H1 (cell line): ENCODE measurements at regions of chr2 and their contacts with region 1.

Region 1: DNA sequence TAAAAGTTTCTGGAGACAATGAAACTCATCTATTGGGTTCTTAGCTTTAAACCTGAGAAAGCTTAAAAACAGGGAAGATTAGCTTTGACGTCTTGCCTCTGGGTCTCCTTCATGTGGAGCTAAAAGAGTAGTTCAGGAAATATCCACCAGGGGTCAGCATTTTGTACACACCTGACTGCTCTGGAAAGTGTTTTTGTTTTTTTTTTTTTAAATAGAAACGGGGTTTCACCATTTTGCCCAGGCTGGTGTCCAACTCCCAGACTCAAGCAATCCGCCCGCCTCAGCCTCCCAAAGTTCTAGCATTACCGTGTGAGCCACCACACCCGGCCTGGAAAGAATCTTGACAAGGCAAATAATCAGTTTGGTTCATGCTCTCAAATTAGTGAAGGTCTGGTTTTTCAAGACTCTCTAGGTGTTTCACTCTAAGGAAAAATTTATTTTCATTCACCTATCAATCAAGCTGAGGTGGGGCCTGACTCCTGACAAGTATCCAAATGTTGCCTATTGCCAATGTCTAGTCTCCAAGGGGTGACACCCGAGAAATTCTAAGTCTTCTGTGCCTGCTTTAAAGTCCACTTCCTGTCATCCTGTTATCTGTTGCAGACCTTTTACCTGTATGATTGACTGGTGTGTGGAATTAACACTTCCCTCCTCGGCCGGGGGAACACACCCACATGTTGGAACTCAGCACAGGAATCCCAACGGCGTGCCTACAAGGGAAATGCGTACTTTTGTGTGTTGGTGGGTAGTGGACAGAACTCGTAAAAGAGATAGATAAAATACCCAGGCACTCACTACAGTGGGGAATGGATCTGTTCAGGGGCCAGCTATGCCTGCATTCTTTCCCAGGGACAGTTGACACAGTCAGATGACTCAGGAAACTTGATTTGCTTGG is 11.3 kb downstream of the IL1RN start:
- DNase-seq: peak in 1 of 2 experiments; percentile 48
- H3K4me3 ChIP-seq: no peak overlapping the region
- H3K27ac ChIP-seq: no peak overlapping the region
- H3K4me1 ChIP-seq: no peaks in the 10 kb centered on the region
- H3K27me3 ChIP-seq: no peaks in the 10 kb centered on the region
- CTCF ChIP-seq: peak in 2 of 3 experiments; percentile 62 to 73; a peak in 3 of 4 replicates
- EP300 ChIP-seq: no peak
- POLR2A ChIP-seq: no peak
- RAD21 ChIP-seq: peak; percentile 49 to 64

Region 2: GRCh38 chr2:113117541-113118262 is 21.0 kb before region 1 on chr2:
- CTCF ChIA-PET with region 1: interaction called, 71 read pairs
- POLR2A ChIA-PET with region 1: interaction called, 3 read pairs
- DNase-seq: peak in 1 of 2 experiments; percentile 30
- H3K4me3 ChIP-seq: no peak overlapping the region; a peak in 1 of 8 replicates
- H3K27ac ChIP-seq: no peak overlapping the region
- H3K4me1 ChIP-seq: peaks cover 0 to 3% (median 0%) of the 10 kb centered on the region in 4 experiments; a peak in 1 of 7 replicates
- H3K27me3 ChIP-seq: no peaks in the 10 kb centered on the region
- CTCF ChIP-seq: no peak
- EP300 ChIP-seq: no peak
- POLR2A ChIP-seq: no peak
- RAD21 ChIP-seq: no peak

Region 3: GRCh38 chr2:113148606-113149560 is 10.2 kb after region 1 on chr2:
- CTCF ChIA-PET with region 1: interaction called, 46 read pairs
- POLR2A ChIA-PET with region 1: no interaction called
- DNase-seq: peak in 1 of 2 experiments; percentile 4
- H3K4me3 ChIP-seq: no peak overlapping the region
- H3K27ac ChIP-seq: no peak overlapping the region
- H3K4me1 ChIP-seq: no peaks in the 10 kb centered on the region
- H3K27me3 ChIP-seq: no peaks in the 10 kb centered on the region; a peak in 1 of 7 replicates
- CTCF ChIP-seq: no peak
- EP300 ChIP-seq: no peak
- POLR2A ChIP-seq: no peak
- RAD21 ChIP-seq: no peak

Region 4: GRCh38 chr2:113167115-113167932 is 28.6 kb after region 1 on chr2:
- CTCF ChIA-PET with region 1: interaction called, 85 read pairs
- POLR2A ChIA-PET with region 1: no interaction called
- DNase-seq: peak in 1 of 2 experiments; percentile 31
- H3K4me3 ChIP-seq: no peak overlapping the region
- H3K27ac ChIP-seq: no peak overlapping the region
- H3K4me1 ChIP-seq: peaks cover 0 to 4% (median 0%) of the 10 kb centered on the region in 4 experiments; a peak in 2 of 7 replicates
- H3K27me3 ChIP-seq: peaks cover 0 to 4% (median 3%) of the 10 kb centered on the region in 4 experiments; a peak in 1 of 7 replicates
- CTCF ChIP-seq: no peak
- EP300 ChIP-seq: no peak
- POLR2A ChIP-seq: no peak
- RAD21 ChIP-seq: no peak

Region 5: DNA sequence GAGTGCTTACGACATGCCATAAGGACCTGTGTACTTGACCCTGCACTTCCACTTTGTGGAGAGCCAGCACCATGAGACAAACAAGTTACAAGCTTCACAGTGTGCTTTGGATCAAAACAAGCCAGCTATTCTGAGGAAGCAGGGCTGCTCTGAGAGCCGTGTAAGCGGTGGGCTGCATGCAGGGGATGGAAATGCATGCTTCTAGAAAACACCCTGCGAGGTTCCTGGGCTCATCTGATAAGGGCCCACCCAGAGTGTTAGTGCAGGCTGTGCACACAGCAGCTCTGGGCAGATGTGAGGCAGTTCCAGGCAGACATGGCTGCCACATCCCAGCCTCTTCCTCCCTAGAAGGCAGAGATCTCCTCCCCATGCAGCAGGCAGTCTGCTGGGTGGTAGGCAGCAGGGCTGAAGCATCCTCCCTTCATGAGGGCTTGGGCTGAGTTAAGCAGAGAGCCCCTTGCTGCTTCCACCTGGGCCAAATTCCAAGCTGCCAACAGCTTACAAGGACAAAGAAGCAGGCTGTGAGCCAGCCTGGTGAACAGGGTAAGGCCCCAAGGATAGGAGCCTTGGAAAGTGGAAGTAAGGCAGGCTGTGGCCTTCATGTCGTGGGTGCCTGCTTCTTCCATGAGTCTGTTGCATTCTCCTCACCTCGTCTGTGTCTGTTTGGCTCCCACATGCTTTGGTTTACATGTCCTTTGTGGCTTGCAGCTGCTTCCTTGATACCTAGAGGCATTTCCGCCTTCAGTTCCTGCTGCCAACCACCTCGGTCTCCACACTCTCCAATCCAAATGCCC is 42.8 kb after region 1 on chr2:
- CTCF ChIA-PET with region 1: interaction called, 63 read pairs
- POLR2A ChIA-PET with region 1: no interaction called
- DNase-seq: no peak
- H3K4me3 ChIP-seq: no peak overlapping the region
- H3K27ac ChIP-seq: no peak overlapping the region
- H3K4me1 ChIP-seq: peaks cover 0 to 6% (median 2%) of the 10 kb centered on the region in 4 experiments; a peak in 3 of 7 replicates
- H3K27me3 ChIP-seq: no peaks in the 10 kb centered on the region
- CTCF ChIP-seq: no peak
- EP300 ChIP-seq: no peak
- POLR2A ChIP-seq: no peak
- RAD21 ChIP-seq: no peak

Region 6: GRCh38 chr2:113370478-113371091 is 231.9 kb after region 1 on chr2:
- CTCF ChIA-PET with region 1: interaction called, 18 read pairs
- POLR2A ChIA-PET with region 1: no interaction called
- DNase-seq: peak; percentile 9 to 66
- H3K4me3 ChIP-seq: no peak overlapping the region
- H3K27ac ChIP-seq: no peak overlapping the region
- H3K4me1 ChIP-seq: no peaks in the 10 kb centered on the region
- H3K27me3 ChIP-seq: no peaks in the 10 kb centered on the region
- CTCF ChIP-seq: peak; percentile 41 to 81 (median 75)
- EP300 ChIP-seq: no peak
- POLR2A ChIP-seq: no peak
- RAD21 ChIP-seq: peak; percentile 87 to 88